GM12878 (cell line): ENCODE measurements at regions of chr17 and their contacts with region 1.

Region 1: DNA sequence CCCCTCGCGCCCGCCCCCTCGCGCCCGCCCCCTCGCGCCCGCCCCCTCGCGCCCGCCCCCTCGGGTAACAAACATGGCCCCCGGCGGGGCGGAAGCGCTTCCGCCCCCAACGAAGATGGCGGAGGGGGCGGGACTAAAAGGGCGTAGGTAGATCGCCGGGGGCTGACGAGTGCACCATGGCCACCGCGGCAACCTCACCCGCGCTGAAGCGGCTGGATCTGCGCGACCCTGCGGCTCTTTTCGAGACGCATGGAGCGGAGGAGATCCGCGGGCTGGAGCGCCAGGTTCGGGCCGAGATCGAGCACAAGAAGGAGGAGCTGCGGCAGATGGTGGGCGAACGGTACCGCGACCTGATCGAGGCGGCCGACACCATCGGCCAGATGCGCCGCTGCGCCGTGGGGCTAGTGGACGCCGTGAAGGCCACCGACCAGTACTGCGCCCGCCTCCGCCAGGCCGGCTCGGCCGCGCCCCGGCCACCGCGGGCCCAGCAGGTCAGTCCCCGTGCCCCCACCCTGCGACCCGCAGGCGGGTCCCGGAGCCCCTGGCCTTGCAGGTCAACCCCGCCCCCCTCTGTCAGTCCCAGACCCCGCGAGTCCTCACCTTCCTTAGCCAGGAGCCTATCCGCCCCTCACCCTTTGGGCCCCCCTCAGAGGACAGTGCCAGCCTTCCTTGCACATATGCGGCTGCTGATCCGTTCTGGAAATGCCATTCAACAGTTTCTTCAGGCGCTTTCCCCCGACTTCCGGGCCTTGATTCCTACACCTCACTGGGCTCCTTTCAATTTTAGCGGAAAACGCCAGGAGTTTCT is at the start of gene COG1:
- DNase-seq: no peak
- ATAC-seq: peak; percentile 85
- H3K4me3 ChIP-seq: peak within 1 kb of the TSS; percentile 76
- H3K27ac ChIP-seq: peak within 1 kb of the TSS; percentile 86
- H3K4me1 ChIP-seq: no peaks in the 10 kb centered on the region
- H3K27me3 ChIP-seq: no peaks in the 10 kb centered on the region
- CTCF ChIP-seq: no peak
- EP300 ChIP-seq: no peak
- POLR2A ChIP-seq: peak; percentile 80
- RAD21 ChIP-seq: no peak
- polyA plus RNA-seq, gene COG1: 10.5 to 11.4 TPM

Region 2: DNA sequence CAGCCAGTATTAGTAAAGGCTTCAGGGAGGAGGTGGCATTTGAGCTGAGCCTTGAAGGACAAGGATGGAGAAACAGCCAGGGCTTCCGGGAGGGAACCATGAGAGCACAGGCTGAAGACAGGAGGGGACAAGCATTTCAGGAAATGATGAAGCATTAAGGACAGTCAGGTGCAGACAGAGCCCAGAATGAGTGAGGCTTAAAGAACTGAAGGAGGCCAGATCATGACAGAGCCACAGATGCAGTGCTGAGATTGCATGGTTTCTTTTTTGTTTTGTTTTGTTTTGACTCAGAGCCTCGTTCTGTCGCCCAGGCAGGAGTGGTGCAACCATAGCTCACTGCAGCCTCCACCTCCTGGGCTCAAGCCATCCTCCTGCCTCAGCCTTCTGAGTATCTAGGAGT is 860.7 kb before region 1 on chr17:
- CTCF ChIA-PET with region 1: no interaction called
- POLR2A ChIA-PET with region 1: no interaction called
- RAD21 ChIA-PET with region 1: no interaction called
- SMC1A ChIA-PET with region 1: no interaction called
- in situ Hi-C with region 1: no loop called
- intact Hi-C with region 1: no loop called
- DNase-seq: peak; percentile 28
- ATAC-seq: peak; percentile 85
- H3K4me3 ChIP-seq: no peak overlapping the region
- H3K27ac ChIP-seq: no peak overlapping the region
- H3K4me1 ChIP-seq: no peaks in the 10 kb centered on the region
- H3K27me3 ChIP-seq: no peaks in the 10 kb centered on the region
- CTCF ChIP-seq: no peak
- EP300 ChIP-seq: no peak
- POLR2A ChIP-seq: no peak
- RAD21 ChIP-seq: no peak

Region 3: DNA sequence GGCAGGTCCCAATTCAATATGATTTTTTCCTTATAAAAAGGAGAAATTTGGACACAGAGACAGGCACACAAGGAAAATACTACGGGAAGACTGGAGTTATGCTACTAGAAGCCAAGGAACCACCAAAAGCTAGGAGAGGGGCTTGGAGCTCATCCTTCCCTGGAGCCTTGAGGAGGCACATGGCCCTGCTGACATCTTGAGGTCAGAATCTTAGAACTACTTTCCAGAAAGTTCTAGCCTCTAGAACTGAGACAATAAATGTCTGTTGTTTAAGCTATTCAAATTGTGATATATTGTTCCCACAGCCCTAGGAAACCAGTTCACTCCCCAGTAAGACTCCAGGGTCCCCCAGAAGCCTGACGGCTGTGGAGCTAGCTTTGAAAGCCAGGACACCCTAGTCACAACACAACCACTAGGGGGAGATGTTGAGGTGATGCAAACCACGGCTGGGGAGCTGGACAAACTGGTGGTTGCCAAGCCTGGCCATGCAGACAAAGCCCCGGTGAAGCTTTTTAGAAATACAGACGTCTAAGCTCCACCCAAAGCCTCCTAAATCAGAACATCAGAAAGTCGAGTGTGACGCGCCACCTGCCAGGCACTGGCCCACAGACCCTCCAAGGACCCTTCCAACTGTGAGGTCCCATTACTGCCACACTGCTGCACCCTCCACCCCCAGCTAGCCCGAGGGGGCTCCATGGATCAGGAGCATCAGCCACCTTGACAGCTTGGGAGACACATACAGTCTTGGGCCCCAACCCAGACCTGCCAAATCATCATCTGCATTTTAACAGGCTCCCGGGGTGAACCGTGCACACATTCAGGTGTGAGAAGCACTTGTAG is 207.0 kb before region 1 on chr17:
- CTCF ChIA-PET with region 1: interaction called, 50 read pairs
- POLR2A ChIA-PET with region 1: no interaction called
- RAD21 ChIA-PET with region 1: interaction called, 38 read pairs
- SMC1A ChIA-PET with region 1: interaction called, 24 read pairs
- in situ Hi-C with region 1: loop called (anchors 5 kb)
- intact Hi-C with region 1: loop called (anchors 1 kb)
- DNase-seq: peak; percentile 47
- ATAC-seq: peak; percentile 99
- H3K4me3 ChIP-seq: no peak overlapping the region
- H3K27ac ChIP-seq: no peak overlapping the region; the same call in 1 of the 2 replicates
- H3K4me1 ChIP-seq: peaks cover 10% of the 10 kb centered on the region
- H3K27me3 ChIP-seq: no peaks in the 10 kb centered on the region
- CTCF ChIP-seq: peak; percentile 84 to 88 (median 88)
- EP300 ChIP-seq: no peak
- POLR2A ChIP-seq: no peak
- RAD21 ChIP-seq: peak; percentile 81

Region 4: DNA sequence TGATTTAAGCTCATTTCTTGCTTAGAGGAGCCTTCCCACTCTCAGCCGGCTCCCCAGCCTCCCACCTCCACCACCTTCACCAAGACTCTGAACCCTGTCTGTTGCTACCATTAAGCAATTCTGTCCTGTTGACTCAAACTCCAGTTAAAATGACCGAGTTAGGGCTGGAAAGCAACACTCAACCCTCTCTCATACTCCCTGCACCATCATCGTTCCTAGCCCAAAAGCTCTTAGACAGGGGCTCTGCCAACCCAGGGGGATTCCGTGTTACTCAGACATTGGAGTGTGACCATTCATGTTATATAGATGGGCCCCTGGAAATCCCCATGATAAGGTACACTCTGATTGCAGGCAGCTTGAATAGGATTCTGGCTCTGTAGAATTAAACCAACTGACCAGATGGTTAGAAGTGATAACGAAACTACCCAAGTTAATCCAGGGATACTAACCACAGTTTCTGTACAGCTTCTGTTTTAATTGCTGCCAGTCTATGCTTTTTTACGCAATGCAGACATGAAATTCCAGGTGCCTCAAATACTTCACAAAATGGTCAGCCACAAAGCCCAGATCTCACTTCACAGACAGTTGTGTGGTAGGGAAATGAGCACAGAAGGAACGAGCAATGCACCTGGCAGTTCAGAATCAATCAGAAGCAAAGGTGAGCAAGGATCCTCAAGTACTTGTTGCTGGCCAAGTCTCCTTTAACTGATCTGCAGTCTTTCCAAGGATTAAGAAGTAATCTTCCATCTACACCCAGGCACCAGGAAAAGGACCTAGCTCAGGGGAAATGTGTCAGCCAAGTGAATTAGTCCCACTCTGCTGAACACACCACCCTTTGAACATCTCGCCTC is 26.1 kb before region 1 on chr17:
- CTCF ChIA-PET with region 1: interaction called, 7 read pairs
- POLR2A ChIA-PET with region 1: interaction called, 3 read pairs
- RAD21 ChIA-PET with region 1: interaction called, 14 read pairs
- SMC1A ChIA-PET with region 1: interaction called, 7 read pairs
- in situ Hi-C with region 1: no loop called
- intact Hi-C with region 1: no loop called
- DNase-seq: no peak
- ATAC-seq: peak; percentile 71
- H3K4me3 ChIP-seq: peak overlapping the region; percentile 82
- H3K27ac ChIP-seq: peak overlapping the region; percentile 51
- H3K4me1 ChIP-seq: peaks cover 34% of the 10 kb centered on the region
- H3K27me3 ChIP-seq: 0 out of 4 replicates have a peak, but pooled peaks cover 0 to 3% of the 10 kb centered on the region in 2 experiments
- CTCF ChIP-seq: no peak
- EP300 ChIP-seq: peak in 1 of 2 experiments; percentile 30; a peak in 1 of 4 replicates
- POLR2A ChIP-seq: no peak
- RAD21 ChIP-seq: no peak

Region 5: DNA sequence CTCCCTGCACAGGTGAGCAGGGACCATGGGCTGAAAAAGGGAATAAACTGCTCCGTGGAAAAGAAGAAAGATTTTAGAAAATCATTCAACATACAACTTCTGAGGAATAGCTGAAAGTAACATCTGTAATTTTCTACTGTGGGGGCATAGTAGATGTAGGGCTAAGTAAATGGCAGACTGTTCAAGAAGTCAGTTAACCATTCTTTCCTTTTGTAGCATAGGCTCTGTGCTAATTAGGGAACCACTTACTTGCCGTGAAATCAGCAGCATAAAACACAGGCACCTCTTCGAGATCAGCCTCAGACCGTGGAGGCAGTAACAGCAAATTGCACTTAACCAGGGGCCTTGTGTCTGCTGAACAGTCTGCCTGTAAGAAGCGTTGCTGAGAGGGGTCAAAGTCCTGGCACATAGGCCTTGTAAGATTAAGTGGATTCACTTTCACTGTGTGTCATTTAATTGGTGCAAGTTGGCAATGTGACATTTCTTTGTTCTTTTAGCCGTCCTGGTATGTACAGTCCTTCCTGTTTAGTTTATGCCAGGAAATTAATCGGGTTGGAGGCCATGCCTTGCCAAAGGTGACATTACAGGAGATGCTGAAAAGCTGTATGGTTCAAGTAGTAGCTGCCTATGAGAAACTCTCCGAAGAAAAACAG is 10.2 kb after region 1 on chr17:
- CTCF ChIA-PET with region 1: interaction called, 20 read pairs
- POLR2A ChIA-PET with region 1: interaction called, 3 read pairs
- RAD21 ChIA-PET with region 1: interaction called, 4 read pairs
- SMC1A ChIA-PET with region 1: interaction called, 16 read pairs
- in situ Hi-C with region 1: no loop called
- intact Hi-C with region 1: no loop called
- DNase-seq: no peak
- ATAC-seq: peak; percentile 91
- H3K4me3 ChIP-seq: no peak overlapping the region
- H3K27ac ChIP-seq: no peak overlapping the region
- H3K4me1 ChIP-seq: no peaks in the 10 kb centered on the region
- H3K27me3 ChIP-seq: no peaks in the 10 kb centered on the region
- CTCF ChIP-seq: no peak
- EP300 ChIP-seq: no peak
- POLR2A ChIP-seq: no peak
- RAD21 ChIP-seq: no peak

Region 6: GRCh38 chr17:73237714-73238113 is 44.6 kb after region 1 on chr17:
- CTCF ChIA-PET with region 1: interaction called, 20 read pairs
- POLR2A ChIA-PET with region 1: interaction called, 25 read pairs
- RAD21 ChIA-PET with region 1: interaction called, 23 read pairs
- SMC1A ChIA-PET with region 1: interaction called, 10 read pairs
- in situ Hi-C with region 1: no loop called
- intact Hi-C with region 1: loop called (anchors 2 kb)
- DNase-seq: no peak
- ATAC-seq: no peak
- H3K4me3 ChIP-seq: no peak overlapping the region; the same call in 1 of the 2 replicates
- H3K27ac ChIP-seq: 0 out of 2 replicates have a peak overlapping the region, but pooled peaks have one; percentile 18
- H3K4me1 ChIP-seq: peaks cover 5% of the 10 kb centered on the region; the same call in 1 of the 2 replicates
- H3K27me3 ChIP-seq: no peaks in the 10 kb centered on the region
- CTCF ChIP-seq: no peak
- EP300 ChIP-seq: no peak
- POLR2A ChIP-seq: no peak
- RAD21 ChIP-seq: no peak

Region 7: GRCh38 chr17:73255671-73256181 is 62.6 kb after region 1 on chr17:
- CTCF ChIA-PET with region 1: interaction called, 61 read pairs
- POLR2A ChIA-PET with region 1: interaction called, 3 read pairs
- RAD21 ChIA-PET with region 1: interaction called, 10 read pairs
- SMC1A ChIA-PET with region 1: interaction called, 28 read pairs
- in situ Hi-C with region 1: no loop called
- intact Hi-C with region 1: loop called (anchors 5 kb)
- DNase-seq: no peak
- ATAC-seq: peak; percentile 94
- H3K4me3 ChIP-seq: no peak overlapping the region
- H3K27ac ChIP-seq: no peak overlapping the region
- H3K4me1 ChIP-seq: no peaks in the 10 kb centered on the region
- H3K27me3 ChIP-seq: no peaks in the 10 kb centered on the region
- CTCF ChIP-seq: peak; percentile 95 to 98 (median 97)
- EP300 ChIP-seq: no peak
- POLR2A ChIP-seq: no peak
- RAD21 ChIP-seq: peak; percentile 97